MCF 10A (cell line): ENCODE measurements at regions of chr14 and their contacts with region 1.

Region 1: DNA sequence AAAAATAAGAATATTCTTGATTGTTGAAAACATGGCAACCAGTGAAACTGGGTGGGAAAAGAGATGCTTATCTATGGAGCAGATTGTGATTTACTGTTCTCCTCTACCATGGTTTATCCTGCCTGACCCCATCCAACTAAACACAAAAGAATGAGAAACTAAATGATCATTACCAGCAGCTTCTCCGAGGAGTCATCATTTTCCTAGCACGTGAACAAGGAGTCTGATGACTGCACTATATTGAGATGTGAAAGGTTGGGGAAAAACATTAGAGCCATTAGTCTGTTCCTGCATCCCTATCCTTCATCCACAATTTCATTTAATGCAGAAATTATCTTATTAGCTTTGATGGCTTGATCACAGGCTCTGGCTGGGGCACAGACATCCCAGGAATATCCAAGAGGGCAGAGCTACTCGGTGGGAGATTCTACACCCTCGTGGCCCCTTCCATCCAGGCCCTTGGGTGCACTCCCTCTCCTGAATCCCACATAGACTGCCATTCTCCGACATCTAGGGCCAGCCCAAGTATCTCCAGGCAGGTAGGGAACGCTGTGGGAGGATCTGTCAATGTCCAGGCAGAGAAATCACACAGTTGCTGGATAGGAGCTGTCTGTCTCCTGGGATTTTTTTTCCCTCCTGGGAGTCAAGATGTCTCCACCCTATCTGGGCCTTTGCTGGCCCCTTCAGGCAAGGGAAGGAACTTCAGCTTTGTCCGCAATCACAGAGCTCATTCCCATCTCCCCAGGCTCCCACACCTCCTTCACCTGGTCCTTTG is 43.3 kb upstream of the DHRS4 start:
- DNase-seq: peak; percentile 75
- H3K4me3 Mint-ChIP-seq: no peak overlapping the region
- H3K27ac Mint-ChIP-seq: no peak overlapping the region
- H3K4me1 Mint-ChIP-seq: no peaks in the 10 kb centered on the region
- H3K27me3 Mint-ChIP-seq: peaks cover 19% of the 10 kb centered on the region
- CTCF ChIP-seq: peak; percentile 93

Region 2: DNA sequence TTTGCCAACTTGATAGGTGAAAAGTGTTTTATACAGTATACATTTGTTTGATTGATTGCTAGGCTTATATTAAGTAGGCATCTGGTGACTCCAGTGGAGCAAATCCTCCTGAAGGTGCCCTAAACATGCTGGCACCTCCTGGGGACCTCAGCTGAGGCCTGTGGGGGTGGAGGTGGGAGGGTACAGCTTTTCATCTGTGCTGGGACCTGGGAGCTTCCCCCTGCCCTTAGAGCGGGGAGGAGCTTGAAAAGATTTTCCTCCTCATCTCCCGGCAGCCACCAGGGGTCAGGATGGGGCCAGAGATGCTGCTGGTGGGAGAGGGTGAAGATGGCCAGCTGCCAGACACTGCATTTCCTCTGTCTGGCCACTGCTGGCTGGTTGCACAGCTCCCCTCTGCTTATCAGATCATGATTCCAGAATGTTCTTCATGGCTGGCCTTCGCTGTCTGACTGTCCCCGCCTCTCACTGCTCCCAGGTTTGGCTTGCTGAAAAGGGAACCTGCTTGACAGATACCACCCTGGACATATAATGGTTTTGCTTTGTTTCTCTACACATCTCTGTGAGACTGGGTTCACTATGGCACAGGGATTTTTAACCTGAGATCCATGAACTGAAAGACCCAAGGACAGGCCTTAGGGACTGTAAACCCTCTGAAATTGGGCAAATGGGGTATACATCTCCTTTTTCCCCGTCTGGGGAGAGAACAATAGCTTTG is 321.2 kb before region 1 on chr14:
- CTCF ChIA-PET with region 1: interaction called, 45 read pairs
- POLR2A ChIA-PET with region 1: interaction called, 6 read pairs
- intact Hi-C with region 1: loop called (anchors 1 kb)
- DNase-seq: peak; percentile 84
- H3K4me3 Mint-ChIP-seq: no peak overlapping the region
- H3K27ac Mint-ChIP-seq: no peak overlapping the region
- H3K4me1 Mint-ChIP-seq: no peaks in the 10 kb centered on the region
- H3K27me3 Mint-ChIP-seq: no peaks in the 10 kb centered on the region
- CTCF ChIP-seq: peak; percentile 74

Region 3: GRCh38 chr14:23665375-23666192 is 244.7 kb before region 1 on chr14:
- CTCF ChIA-PET with region 1: interaction called, 89 read pairs
- POLR2A ChIA-PET with region 1: interaction called, 4 read pairs
- intact Hi-C with region 1: loop called (anchors 1 kb)
- DNase-seq: peak; percentile 58
- H3K4me3 Mint-ChIP-seq: no peak overlapping the region
- H3K27ac Mint-ChIP-seq: no peak overlapping the region
- H3K4me1 Mint-ChIP-seq: peaks cover 11% of the 10 kb centered on the region
- H3K27me3 Mint-ChIP-seq: peaks cover 52% of the 10 kb centered on the region
- CTCF ChIP-seq: peak; percentile 48

Region 4: GRCh38 chr14:23895480-23895879 is 14.8 kb before region 1 on chr14:
- CTCF ChIA-PET with region 1: interaction called, 18 read pairs
- POLR2A ChIA-PET with region 1: no interaction called
- intact Hi-C with region 1: no loop called
- DNase-seq: no peak
- H3K4me3 Mint-ChIP-seq: no peak overlapping the region
- H3K27ac Mint-ChIP-seq: no peak overlapping the region
- H3K4me1 Mint-ChIP-seq: no peaks in the 10 kb centered on the region
- H3K27me3 Mint-ChIP-seq: peaks cover 7% of the 10 kb centered on the region
- CTCF ChIP-seq: no peak

Region 5: GRCh38 chr14:23929822-23930294 is 19.6 kb after region 1 on chr14:
- CTCF ChIA-PET with region 1: interaction called, 40 read pairs
- POLR2A ChIA-PET with region 1: no interaction called
- intact Hi-C with region 1: no loop called
- DNase-seq: peak; percentile 80
- H3K4me3 Mint-ChIP-seq: no peak overlapping the region
- H3K27ac Mint-ChIP-seq: no peak overlapping the region
- H3K4me1 Mint-ChIP-seq: no peaks in the 10 kb centered on the region
- H3K27me3 Mint-ChIP-seq: no peaks in the 10 kb centered on the region
- CTCF ChIP-seq: peak; percentile 73

Region 6: DNA sequence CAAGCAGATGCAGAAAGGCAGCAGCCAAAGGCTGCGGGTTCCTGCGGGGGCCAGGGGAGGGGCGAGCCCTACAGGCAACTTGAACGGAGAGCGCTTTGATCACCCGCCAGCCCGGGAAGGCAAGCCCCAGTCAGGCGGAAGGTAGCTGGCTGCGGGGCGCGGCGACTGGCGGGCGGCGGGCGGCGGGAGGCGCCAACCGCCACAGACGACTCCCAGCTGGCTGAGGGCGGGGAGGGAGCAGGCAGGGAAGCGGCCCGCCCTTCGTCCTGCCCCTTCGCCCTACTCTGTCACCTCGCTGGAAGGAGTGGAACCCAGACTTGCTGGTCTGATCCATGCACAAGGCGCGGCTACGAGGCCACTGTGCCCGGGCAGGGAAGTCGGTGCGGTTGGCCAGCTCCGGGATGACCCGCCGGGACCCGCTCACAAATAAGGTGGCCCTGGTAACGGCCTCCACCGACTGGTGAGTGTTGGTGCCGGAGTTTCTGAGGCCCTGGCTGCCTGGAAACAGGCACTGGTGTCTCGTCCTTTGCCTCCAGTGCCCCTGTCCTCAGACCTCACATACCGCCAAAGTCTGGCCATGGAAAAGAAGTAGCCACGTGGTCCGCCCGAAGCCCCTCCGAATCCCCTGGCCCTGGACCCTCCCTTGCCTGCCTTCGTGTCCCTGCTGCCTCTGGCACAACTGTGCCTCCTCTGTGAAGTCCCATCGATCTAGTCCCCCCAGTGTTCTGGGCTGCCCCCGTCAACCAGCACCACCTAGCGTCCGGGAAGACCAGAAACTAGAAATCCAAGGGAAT is 126.1 kb after region 1 on chr14:
- CTCF ChIA-PET with region 1: no interaction called
- POLR2A ChIA-PET with region 1: no interaction called
- intact Hi-C with region 1: no loop called
- DNase-seq: peak; percentile 69
- H3K4me3 Mint-ChIP-seq: peak overlapping the region; percentile 76
- H3K27ac Mint-ChIP-seq: peak overlapping the region; percentile 54
- H3K4me1 Mint-ChIP-seq: peaks cover 11% of the 10 kb centered on the region
- H3K27me3 Mint-ChIP-seq: no peaks in the 10 kb centered on the region
- CTCF ChIP-seq: peak; percentile 88